ENCODE measurements at regions of chr10 and their contacts with region 1.

Region 1: DNA sequence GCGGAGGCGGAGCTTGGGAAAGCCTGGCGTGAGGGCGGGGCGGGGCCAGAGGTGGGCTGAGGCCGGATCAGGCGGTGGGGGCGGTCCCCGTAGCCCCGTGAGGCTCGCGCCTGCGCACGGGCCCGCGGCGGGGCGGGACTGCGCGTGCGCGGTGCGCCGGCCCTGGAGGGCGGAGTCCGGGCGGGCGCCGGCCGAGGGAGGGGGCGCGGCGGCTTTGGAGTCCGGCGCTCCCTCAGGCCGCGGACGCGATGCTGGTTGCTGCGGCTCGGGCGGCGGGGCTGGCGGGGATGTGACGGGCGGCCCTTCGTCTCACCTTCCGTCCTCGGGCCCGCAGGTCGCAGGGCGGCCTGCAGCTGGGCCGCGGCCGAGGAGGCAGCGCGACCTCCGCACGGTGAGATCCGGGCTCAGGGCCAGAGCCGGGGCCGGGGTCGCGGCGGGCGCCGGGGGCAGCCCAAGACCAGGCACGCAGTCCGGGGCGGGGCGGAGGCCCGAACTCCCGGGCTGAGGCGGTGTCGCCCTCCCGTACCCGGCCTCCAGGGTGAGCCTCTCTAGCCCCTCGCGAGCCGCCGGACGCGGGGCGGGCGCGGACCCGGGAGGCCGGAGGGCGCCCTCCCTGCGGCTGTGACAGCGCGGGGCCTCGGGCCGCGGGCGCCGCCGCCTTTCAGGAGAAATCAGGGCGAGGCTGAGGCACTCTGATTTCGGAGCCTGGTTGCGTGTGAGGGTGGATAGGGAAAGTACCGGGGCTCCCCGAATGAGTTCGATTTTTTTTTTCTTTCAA is at the start of gene CCSER2:
- DNase-seq: peak; percentile 94
- H3K4me3 Mint-ChIP-seq: peak within 1 kb of the TSS; percentile 96
- H3K27ac Mint-ChIP-seq: peak within 1 kb of the TSS; percentile 99
- H3K4me1 Mint-ChIP-seq: peaks cover 32% of the 10 kb centered on the region
- H3K27me3 Mint-ChIP-seq: peaks cover 16% of the 10 kb centered on the region

Region 2: DNA sequence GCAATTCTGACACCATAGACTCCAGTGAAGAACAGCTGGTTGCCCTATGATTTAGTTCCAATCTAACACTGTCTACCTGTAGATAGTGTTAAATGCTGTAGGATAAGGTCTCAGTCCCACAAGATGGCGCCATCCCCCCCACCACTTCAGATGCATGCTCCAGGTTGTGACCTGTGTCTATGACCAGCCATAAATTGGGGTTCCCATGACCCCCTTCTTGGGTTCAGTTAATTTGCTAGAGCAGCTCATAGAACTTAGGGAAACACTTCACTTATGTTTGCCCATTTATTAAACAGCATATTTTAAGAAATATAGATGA is 12.9 kb after region 1 on chr10:
- CTCF ChIA-PET with region 1: interaction called, 11 read pairs
- DNase-seq: peak; percentile 24
- H3K4me3 Mint-ChIP-seq: no peak overlapping the region
- H3K27ac Mint-ChIP-seq: peak overlapping the region; percentile 30
- H3K4me1 Mint-ChIP-seq: peaks cover 58% of the 10 kb centered on the region
- H3K27me3 Mint-ChIP-seq: no peaks in the 10 kb centered on the region

Region 3: GRCh38 chr10:84469470-84469869 is 140.9 kb after region 1 on chr10:
- CTCF ChIA-PET with region 1: no interaction called
- DNase-seq: no peak
- H3K4me3 Mint-ChIP-seq: no peak overlapping the region
- H3K27ac Mint-ChIP-seq: no peak overlapping the region
- H3K4me1 Mint-ChIP-seq: no peaks in the 10 kb centered on the region
- H3K27me3 Mint-ChIP-seq: no peaks in the 10 kb centered on the region

Measured in activated naive CD4-positive, alpha-beta T cell treated with anti-CD3 and anti-CD28 coated beads, Interleukin-2, amount 10 ng/mL, durations not matched to agents 7 days and 5 days (primary cell).